ENCODE measurements at regions of chr2 and their contacts with region 1.

Region 1: DNA sequence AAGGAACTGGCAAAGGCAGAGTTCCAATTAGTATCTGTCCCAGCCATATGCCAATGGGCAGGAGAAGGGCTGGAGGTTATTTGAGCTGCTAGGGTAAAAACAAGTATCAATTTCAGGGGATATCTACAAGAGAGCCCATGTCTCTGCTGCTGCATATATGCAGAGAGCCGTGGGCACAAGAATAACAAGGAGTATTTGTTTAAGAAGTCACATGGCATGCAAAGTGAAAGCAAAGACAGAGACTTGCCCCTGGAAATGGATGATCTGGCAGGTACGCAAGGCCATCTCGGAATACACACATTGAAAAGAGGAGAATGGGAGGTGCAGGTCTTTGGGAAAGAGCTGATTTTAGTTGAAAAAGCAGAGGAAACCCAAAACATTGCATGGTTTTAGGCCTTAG is 170.6 kb downstream of the EVA1A start:
- DNase-seq: no peak
- ATAC-seq: no peak
- H3K4me3 ChIP-seq: no peak overlapping the region
- H3K27ac ChIP-seq: no peak overlapping the region
- H3K4me1 ChIP-seq: no peaks in the 10 kb centered on the region
- H3K27me3 ChIP-seq: peaks cover 0 to 4% (median 0%) of the 10 kb centered on the region in 7 donors
- CTCF ChIP-seq: no peak

Region 2: DNA sequence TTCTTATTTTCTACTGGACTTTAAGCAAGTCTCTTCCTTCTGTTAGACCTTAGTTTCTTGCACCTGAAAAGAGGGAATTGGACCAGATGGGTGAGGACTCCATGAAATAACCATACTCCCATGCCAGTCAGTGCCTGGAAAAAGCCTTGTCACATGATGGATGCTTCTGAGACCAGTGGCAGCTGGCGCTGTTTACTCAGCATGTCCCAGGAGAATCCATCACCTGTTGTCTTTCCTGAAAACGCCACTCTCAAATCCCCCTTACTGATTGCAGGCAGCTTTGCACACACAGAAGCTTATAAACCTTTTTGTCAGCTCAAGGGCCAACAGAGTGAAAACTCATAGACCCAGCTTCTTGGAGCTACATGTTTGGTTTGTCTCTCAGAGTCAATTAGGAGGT is 314.1 kb before region 1 on chr2:
- intact Hi-C with region 1: loop called in 1 of 10 experiments (anchors 10 kb)
- DNase-seq: no peak
- ATAC-seq: no peak
- H3K4me3 ChIP-seq: no peak overlapping the region
- H3K27ac ChIP-seq: no peak overlapping the region
- H3K4me1 ChIP-seq: no peaks in the 10 kb centered on the region
- H3K27me3 ChIP-seq: no peaks in the 10 kb centered on the region
- CTCF ChIP-seq: no peak

Region 3: DNA sequence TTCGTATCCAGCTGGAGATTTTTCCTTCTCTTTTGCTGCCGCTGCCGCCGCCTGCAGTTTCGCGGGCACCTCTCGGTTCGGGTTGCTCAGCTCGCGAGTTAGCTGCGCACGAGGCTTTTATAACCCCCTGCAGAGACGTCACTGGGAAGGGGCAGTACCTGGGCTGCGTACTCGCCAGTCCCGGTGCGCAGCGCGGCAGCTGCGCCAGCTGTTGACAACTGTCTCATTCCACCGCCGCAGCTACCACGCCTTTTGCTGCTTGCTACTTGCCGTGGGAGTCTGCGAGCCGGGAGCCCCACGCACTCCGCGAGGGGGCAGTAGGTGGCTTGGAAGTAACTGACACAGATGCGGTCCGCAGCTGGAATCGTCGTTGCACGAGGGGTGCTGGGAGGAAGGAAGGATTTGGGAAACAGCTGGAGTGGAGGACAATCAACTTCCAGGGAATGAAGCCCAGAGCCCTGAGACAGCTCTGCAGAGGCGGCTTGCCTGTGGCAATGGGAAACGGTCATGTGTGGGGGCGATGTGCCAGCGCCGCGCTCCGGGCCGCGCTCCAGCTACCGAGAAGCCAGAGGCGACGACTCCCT is 190.6 kb before region 1 on chr2 and contains the start of gene TACR1:
- intact Hi-C with region 1: loop called in 1 of 10 experiments (anchors 10 kb)
- DNase-seq: peak; percentile 52 to 64
- ATAC-seq: peak; percentile 69 to 87 (median 78)
- H3K4me3 ChIP-seq: peak within 1 kb of the TSS; percentile 27 to 55 (median 45)
- H3K27ac ChIP-seq: no peak within 1 kb of the TSS
- H3K4me1 ChIP-seq: peaks cover 5 to 24% (median 19%) of the 10 kb centered on the region in 9 donors
- H3K27me3 ChIP-seq: peaks cover 0 to 92% (median 64%) of the 10 kb centered on the region in 7 donors
- CTCF ChIP-seq: peak in 8 of 9 donors; percentile 21 to 73 (median 60)
- total RNA-seq, gene TACR1: 0.07 to 0.38 (median 0.21) TPM in 7 of 10 donors, not detected in the others

Measured in heart right ventricle (tissue), 16 donors.